Mammary epithelial cell (primary cell): ENCODE measurements at regions of chr3 and their contacts with region 1.

Region 1: GRCh38 chr3:67037615-67038014 is 39.5 kb downstream of the KBTBD8 start:
- DNase-seq: no peak
- H3K4me3 ChIP-seq: no peak overlapping the region
- H3K27ac ChIP-seq: no peak overlapping the region
- H3K4me1 ChIP-seq: no peaks in the 10 kb centered on the region
- H3K27me3 ChIP-seq: no peaks in the 10 kb centered on the region
- CTCF ChIP-seq: peak in 1 of 2 donors; percentile 28

Region 2: GRCh38 chr3:66938338-66938963 is 99.2 kb before region 1 on chr3:
- CTCF ChIA-PET with region 1: no interaction called
- dilution Hi-C with region 1: no loop called
- in situ Hi-C with region 1: no loop called
- intact Hi-C with region 1: loop called (anchors 1 kb)
- DNase-seq: peak; percentile 46
- H3K4me3 ChIP-seq: no peak overlapping the region
- H3K27ac ChIP-seq: no peak overlapping the region
- H3K4me1 ChIP-seq: no peaks in the 10 kb centered on the region
- H3K27me3 ChIP-seq: peaks cover 3% of the 10 kb centered on the region
- CTCF ChIP-seq: peak; percentile 67 to 81

Region 3: DNA sequence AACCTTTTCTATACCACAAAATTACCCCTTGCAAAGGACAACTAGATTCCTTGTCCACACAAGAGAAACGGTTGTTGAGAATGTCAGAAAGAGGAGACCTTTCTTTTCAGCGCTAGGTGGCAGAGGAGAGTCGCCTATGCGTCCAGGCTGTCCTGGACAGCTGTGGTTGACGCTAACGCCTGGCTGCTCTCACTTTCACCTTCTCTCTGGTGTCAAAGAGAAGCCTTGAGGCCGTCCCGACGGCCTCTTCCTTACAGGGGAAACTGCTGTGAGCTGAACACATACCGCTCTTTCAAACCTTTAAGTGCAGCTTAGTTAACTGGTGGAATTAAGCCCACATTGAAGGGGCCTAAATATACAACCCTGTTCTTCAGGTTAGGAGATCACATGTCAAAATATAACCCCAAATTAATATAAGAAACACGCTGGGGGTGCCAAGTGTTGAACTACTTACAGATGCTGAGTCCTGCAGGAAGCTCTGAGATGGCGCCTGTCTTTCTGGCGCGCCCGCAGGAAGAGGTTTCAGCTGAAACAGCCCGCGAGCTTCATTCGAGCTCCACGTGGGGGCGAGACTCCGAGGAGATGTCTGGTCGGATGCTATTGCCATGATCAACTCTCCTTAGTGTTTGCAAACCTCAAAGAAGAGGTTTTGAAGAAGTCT is 65.6 kb before region 1 on chr3:
- CTCF ChIA-PET with region 1: interaction called, 6 read pairs
- dilution Hi-C with region 1: no loop called
- in situ Hi-C with region 1: no loop called
- intact Hi-C with region 1: loop called (anchors 1 kb)
- DNase-seq: peak; percentile 43
- H3K4me3 ChIP-seq: peak overlapping the region; percentile 8 to 19 (median 14)
- H3K27ac ChIP-seq: no peak overlapping the region
- H3K4me1 ChIP-seq: no peaks in the 10 kb centered on the region
- H3K27me3 ChIP-seq: peaks cover 3% of the 10 kb centered on the region
- CTCF ChIP-seq: peak; percentile 83 to 85

Region 4: GRCh38 chr3:66989860-66990665 is 47.6 kb before region 1 on chr3:
- CTCF ChIA-PET with region 1: no interaction called
- dilution Hi-C with region 1: no loop called
- in situ Hi-C with region 1: no loop called
- intact Hi-C with region 1: loop called (anchors 1 kb)
- DNase-seq: no peak
- H3K4me3 ChIP-seq: no peak overlapping the region
- H3K27ac ChIP-seq: no peak overlapping the region
- H3K4me1 ChIP-seq: peaks cover 3% of the 10 kb centered on the region
- H3K27me3 ChIP-seq: no peaks in the 10 kb centered on the region
- CTCF ChIP-seq: peak; percentile 32 to 50